Calu3 (cell line): ENCODE measurements at regions of chr12 and their contacts with region 1.

Region 1: GRCh38 chr12:45268672-45269411 is 52.9 kb downstream of the ANO6 start:
- DNase-seq: peak; percentile 76
- H3K4me3 Mint-ChIP-seq: peak overlapping the region; percentile 26
- H3K27ac Mint-ChIP-seq: peak overlapping the region; percentile 50
- H3K4me1 Mint-ChIP-seq: peaks cover 31% of the 10 kb centered on the region
- H3K27me3 Mint-ChIP-seq: no peaks in the 10 kb centered on the region
- CTCF ChIP-seq: no peak

Region 2: GRCh38 chr12:44258246-44258645 is 1010.6 kb before region 1 on chr12:
- CTCF ChIA-PET with region 1: no interaction called
- intact Hi-C with region 1: no loop called
- DNase-seq: no peak
- H3K4me3 Mint-ChIP-seq: no peak overlapping the region
- H3K27ac Mint-ChIP-seq: no peak overlapping the region
- H3K4me1 Mint-ChIP-seq: no peaks in the 10 kb centered on the region
- H3K27me3 Mint-ChIP-seq: no peaks in the 10 kb centered on the region
- CTCF ChIP-seq: no peak

Region 3: DNA sequence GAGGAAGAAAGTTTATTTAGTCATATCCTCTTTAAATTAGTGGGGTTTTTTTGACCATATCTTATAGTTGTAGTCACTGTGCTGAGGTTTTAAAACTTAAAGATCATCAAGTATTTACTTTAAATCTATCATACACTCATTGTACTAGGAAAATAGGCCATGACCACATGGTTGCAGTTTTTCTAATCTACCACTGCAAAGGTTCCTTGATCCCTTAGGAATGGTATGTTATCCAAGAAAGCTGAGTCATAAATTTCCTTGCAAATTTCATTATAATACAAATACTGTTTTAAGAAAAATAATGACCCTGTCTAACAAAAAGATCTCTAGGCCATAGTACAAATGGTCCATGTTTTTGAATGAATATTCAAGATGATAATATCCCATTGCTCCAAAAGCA is 292.6 kb before region 1 on chr12:
- CTCF ChIA-PET with region 1: no interaction called
- intact Hi-C with region 1: no loop called
- DNase-seq: no peak
- H3K4me3 Mint-ChIP-seq: no peak overlapping the region
- H3K27ac Mint-ChIP-seq: no peak overlapping the region
- H3K4me1 Mint-ChIP-seq: no peaks in the 10 kb centered on the region
- H3K27me3 Mint-ChIP-seq: no peaks in the 10 kb centered on the region
- CTCF ChIP-seq: no peak

Region 4: DNA sequence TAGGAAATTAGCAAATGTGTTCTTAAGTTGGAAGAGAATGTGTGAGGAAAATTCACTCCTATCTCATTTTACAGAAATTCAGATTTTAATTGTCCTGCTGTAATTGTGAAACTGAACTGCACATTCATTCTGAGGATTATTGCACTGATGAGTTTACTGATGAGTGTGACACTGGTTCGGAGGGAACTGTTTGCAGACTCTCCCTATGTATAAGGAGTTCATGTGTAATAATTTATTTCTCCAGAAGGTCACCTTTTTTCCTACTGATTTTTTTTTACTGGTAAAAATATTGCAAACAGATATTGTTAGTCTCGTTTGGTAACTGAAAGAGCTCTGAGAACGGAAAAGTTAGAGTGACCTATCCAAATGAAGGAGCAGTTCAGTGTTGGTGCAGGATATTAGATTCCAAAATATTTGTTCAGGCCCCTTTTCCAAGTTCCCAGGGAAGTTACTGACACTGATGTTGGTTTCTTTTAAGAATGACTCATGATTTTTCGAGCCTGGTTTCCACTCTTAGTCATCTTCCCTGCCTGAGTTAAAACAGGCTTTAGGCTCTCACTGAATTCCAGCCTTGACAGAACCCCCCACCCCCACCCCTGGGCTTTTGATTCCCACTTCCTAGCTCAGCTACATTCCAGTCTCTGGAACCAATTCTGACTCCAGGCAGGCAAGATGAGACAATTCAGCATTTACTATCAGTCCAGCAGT is 34.5 kb before region 1 on chr12:
- CTCF ChIA-PET with region 1: interaction called, 6 read pairs
- intact Hi-C with region 1: loop called (anchors 5 kb)
- DNase-seq: no peak
- H3K4me3 Mint-ChIP-seq: peak overlapping the region; percentile 56
- H3K27ac Mint-ChIP-seq: peak overlapping the region; percentile 96
- H3K4me1 Mint-ChIP-seq: peaks cover 40% of the 10 kb centered on the region
- H3K27me3 Mint-ChIP-seq: no peaks in the 10 kb centered on the region
- CTCF ChIP-seq: no peak

Region 5: DNA sequence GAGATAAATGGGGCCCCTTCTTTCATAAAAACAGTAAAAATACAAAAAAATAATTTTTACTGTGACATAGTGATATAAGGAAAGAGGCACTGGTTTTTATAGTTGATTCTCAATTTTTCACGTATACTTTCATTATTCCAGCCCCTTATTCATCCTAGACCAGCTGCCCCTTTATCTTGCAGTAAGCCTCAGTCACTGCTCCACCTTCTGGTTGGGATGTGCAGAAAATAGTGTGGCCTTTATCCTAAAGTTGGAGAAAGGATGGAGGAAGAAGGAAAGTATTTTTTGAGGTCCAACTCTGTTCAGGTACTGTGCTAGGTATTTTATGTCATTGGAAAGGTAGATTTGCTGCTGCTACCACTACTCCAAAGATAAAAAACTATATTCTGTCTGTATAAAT is 119.7 kb after region 1 on chr12:
- CTCF ChIA-PET with region 1: no interaction called
- intact Hi-C with region 1: loop called (anchors 1 kb)
- DNase-seq: peak; percentile 8
- H3K4me3 Mint-ChIP-seq: no peak overlapping the region
- H3K27ac Mint-ChIP-seq: no peak overlapping the region
- H3K4me1 Mint-ChIP-seq: no peaks in the 10 kb centered on the region
- H3K27me3 Mint-ChIP-seq: no peaks in the 10 kb centered on the region
- CTCF ChIP-seq: no peak